Ascending aorta (tissue), 2 donors: ENCODE measurements at regions of chr1 and their contacts with region 1.

Region 1: DNA sequence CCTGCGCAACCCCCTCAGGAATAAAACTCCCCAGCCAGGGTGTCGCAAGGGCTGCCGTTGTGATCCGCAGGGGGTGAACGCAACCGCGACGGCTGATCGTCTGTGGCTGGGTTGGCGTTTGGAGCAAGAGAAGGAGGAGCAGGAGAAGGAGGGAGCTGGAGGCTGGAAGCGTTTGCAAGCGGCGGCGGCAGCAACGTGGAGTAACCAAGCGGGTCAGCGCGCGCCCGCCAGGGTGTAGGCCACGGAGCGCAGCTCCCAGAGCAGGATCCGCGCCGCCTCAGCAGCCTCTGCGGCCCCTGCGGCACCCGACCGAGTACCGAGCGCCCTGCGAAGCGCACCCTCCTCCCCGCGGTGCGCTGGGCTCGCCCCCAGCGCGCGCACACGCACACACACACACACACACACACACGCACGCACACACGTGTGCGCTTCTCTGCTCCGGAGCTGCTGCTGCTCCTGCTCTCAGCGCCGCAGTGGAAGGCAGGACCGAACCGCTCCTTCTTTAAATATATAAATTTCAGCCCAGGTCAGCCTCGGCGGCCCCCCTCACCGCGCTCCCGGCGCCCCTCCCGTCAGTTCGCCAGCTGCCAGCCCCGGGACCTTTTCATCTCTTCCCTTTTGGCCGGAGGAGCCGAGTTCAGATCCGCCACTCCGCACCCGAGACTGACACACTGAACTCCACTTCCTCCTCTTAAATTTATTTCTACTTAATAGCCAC is 696 bp downstream of the TGFB2 start:
- DNase-seq: peak in 1 of 2 donors; percentile 83
- H3K4me3 ChIP-seq: peak overlapping the region; percentile 88 to 89
- H3K27ac ChIP-seq: peak overlapping the region; percentile 81 to 89
- H3K4me1 ChIP-seq: no peaks in the 10 kb centered on the region
- H3K27me3 ChIP-seq: no peaks in the 10 kb centered on the region
- CTCF ChIP-seq: no peak

Region 2: DNA sequence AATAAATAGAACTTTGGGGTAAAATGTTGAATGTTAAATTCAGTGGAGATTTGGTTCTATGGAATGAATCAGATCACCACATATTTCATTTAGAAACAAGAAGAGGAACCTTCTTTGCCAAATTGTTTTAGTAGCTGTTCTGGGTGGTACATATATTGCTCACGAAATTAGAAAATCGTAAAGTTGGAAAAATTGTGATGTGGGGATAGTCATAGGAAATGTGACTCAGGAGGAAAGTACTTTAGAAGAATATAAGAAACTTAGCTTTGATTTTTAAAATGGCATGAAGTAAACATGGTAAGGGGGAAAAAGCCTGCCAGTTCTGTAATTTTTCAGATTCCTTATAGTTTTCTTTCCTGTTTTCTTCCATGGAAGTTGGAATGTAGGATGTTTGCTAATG is 33.3 kb before region 1 on chr1:
- intact Hi-C with region 1: no loop called
- DNase-seq: no peak
- H3K4me3 ChIP-seq: no peak overlapping the region
- H3K27ac ChIP-seq: no peak overlapping the region
- H3K4me1 ChIP-seq: no peaks in the 10 kb centered on the region
- H3K27me3 ChIP-seq: no peaks in the 10 kb centered on the region
- CTCF ChIP-seq: no peak

Region 3: GRCh38 chr1:218361298-218362065 is 15.7 kb after region 1 on chr1:
- intact Hi-C with region 1: loop called (anchors 2 kb)
- DNase-seq: no peak
- H3K4me3 ChIP-seq: no peak overlapping the region
- H3K27ac ChIP-seq: no peak overlapping the region
- H3K4me1 ChIP-seq: peaks cover 17 to 30% of the 10 kb centered on the region in 2 donors
- H3K27me3 ChIP-seq: no peaks in the 10 kb centered on the region
- CTCF ChIP-seq: peak in 2 of 3 experiments; percentile 32 to 61

Region 4: DNA sequence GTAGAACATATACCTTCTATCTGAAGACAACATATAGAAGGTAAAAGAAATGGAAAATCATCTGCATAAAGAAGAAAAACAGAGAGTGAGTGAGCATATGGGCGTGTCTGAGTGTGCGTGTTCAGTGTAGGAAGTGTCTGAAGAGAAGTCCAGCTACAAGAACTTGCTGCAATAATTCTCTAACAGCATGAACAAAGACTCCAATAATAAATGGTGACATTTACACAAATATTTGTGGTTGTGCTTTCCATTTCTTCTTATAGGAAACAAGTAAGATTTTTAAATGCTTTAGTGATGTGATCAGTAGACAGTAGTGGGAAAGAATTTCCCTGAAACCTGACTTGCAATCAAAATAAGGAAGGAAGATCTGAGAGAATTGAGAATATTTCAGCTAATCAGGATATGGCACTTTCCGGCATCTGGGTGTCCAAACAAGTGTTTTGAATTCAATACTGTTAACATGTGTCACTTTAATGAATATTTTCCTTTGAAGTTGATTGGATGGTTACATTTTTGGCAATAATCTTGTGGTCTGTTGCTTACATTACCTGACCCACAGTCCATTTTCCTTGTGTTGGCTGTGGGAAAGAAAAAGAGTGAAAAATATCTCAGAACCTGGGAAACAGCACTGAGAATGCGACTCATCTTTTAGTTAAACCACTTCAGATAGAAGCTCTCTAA is 153.3 kb after region 1 on chr1:
- intact Hi-C with region 1: loop called (anchors 2 kb)
- DNase-seq: no peak
- H3K4me3 ChIP-seq: peak overlapping the region; percentile 32 to 58
- H3K27ac ChIP-seq: peak overlapping the region; percentile 71 to 73
- H3K4me1 ChIP-seq: peaks cover 0 to 26% of the 10 kb centered on the region in 2 donors
- H3K27me3 ChIP-seq: no peaks in the 10 kb centered on the region
- CTCF ChIP-seq: no peak

Region 5: GRCh38 chr1:218823291-218823900 is 477.6 kb after region 1 on chr1:
- intact Hi-C with region 1: loop called (anchors 10 kb)
- DNase-seq: no peak
- H3K4me3 ChIP-seq: no peak overlapping the region
- H3K27ac ChIP-seq: no peak overlapping the region
- H3K4me1 ChIP-seq: no peaks in the 10 kb centered on the region
- H3K27me3 ChIP-seq: no peaks in the 10 kb centered on the region
- CTCF ChIP-seq: no peak

Region 6: GRCh38 chr1:219173758-219174588 is 828.1 kb after region 1 on chr1 and contains the start of gene LYPLAL1:
- intact Hi-C with region 1: loop called (anchors 5 kb)
- DNase-seq: peak; percentile 52 to 92
- H3K4me3 ChIP-seq: peak within 1 kb of the TSS; percentile 67 to 76
- H3K27ac ChIP-seq: peak within 1 kb of the TSS; percentile 86 to 93
- H3K4me1 ChIP-seq: peaks cover 0 to 7% of the 10 kb centered on the region in 2 donors
- H3K27me3 ChIP-seq: no peaks in the 10 kb centered on the region
- CTCF ChIP-seq: no peak
- total RNA-seq, gene LYPLAL1: 27.5 TPM